Ovary (tissue), 10 donors: ENCODE measurements at regions of chr14 and their contacts with region 1.

Region 1: DNA sequence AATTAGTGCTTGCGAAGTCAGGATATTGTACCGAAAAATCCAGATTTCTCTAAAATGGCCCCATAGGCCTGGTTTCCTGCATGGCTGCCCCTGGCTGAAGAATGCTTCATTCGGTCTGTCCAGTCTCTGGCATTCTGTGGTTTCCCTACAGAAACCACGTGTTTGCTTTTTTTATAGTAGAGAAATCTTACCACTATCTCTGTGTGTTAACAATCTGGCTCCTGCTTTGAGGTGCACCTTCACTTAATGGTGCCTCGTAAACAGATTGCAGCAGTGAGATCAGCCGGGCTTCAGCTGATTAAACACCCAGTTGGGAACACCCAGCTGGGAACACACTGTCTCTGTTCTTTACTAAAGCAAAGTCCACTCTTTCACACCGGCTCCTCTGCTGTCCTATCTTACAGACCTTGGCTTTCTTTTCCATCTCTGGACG is 6.7 kb upstream of the DNAAF2 start:
- DNase-seq: no peak
- H3K4me3 ChIP-seq: no peak overlapping the region
- H3K27ac ChIP-seq: no peak overlapping the region
- H3K4me1 ChIP-seq: no peaks in the 10 kb centered on the region
- H3K27me3 ChIP-seq: no peaks in the 10 kb centered on the region
- CTCF ChIP-seq: no peak
- EP300 ChIP-seq: no peak
- POLR2A ChIP-seq: no peak

Region 2: DNA sequence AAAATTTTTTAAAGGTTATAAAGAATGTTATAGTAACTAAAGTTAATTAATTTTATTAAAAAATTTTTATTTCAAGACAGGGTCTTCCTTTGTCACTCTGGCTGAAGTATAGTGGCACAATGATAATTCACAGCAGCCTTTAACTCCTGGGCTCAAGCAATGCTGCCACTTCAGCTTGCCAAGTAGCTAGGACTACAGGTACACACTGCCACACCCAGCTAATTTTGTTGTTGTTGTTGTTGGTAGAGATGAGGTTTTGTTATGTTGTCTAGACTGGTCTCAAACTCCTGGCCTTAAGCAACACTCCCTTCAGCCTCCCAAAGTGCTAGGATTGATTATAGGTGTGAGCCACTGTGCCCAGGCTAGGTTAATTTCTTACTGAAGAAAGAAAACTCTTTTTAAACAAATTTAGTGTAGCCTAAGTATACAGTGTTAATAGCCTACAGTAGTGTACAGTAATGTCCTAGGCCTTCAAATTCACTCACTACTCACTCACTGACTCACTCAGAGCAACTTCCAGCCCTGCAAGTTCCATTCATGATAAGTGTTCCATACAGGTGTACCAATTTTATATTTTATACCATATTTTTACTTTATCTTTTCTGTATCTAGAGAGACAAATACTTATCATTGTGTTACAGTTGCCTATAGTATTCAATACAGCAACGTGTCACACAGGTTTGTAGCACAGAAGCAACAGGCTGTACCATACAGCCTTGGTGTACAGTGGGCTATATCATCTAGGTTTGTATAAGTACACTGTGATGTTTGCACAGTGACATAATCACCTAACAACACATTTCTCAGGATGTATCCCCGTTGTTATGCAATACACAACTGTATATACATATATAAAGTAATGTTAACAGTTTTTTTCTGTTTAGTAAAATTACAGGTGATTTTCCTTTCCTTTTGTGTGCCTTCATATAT is 18.1 kb after region 1 on chr14:
- intact Hi-C with region 1: no loop called
- DNase-seq: no peak
- H3K4me3 ChIP-seq: no peak overlapping the region
- H3K27ac ChIP-seq: no peak overlapping the region
- H3K4me1 ChIP-seq: no peaks in the 10 kb centered on the region
- H3K27me3 ChIP-seq: no peaks in the 10 kb centered on the region
- CTCF ChIP-seq: no peak
- EP300 ChIP-seq: no peak
- POLR2A ChIP-seq: no peak

Region 3: GRCh38 chr14:49703965-49704364 is 62.3 kb after region 1 on chr14:
- intact Hi-C with region 1: loop called in 1 of 4 experiments (anchors 10 kb)
- DNase-seq: no peak
- H3K4me3 ChIP-seq: no peak overlapping the region
- H3K27ac ChIP-seq: no peak overlapping the region
- H3K4me1 ChIP-seq: peaks cover 1% of the 10 kb centered on the region
- H3K27me3 ChIP-seq: no peaks in the 10 kb centered on the region
- CTCF ChIP-seq: no peak
- EP300 ChIP-seq: no peak
- POLR2A ChIP-seq: no peak

Region 4: DNA sequence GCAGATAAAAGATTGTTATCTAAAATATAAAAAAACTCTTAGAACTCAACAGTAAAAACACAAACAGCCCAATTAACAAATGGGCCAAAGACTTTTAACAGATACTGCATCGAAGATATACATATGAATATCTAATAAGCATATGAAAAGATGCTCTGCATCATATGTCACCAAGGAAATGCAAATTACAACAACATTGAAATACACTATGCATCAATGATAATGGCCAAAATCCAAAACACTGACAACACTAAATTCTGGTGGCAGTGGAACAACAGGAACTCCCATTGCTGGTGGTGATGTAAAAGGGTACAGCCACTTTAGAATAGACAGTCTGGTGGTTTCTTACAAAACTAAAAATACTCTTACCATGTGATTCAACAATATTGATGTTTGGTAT is 167.1 kb after region 1 on chr14:
- intact Hi-C with region 1: no loop called
- DNase-seq: no peak
- H3K4me3 ChIP-seq: no peak overlapping the region
- H3K27ac ChIP-seq: no peak overlapping the region
- H3K4me1 ChIP-seq: no peaks in the 10 kb centered on the region
- H3K27me3 ChIP-seq: no peaks in the 10 kb centered on the region
- CTCF ChIP-seq: no peak
- EP300 ChIP-seq: no peak
- POLR2A ChIP-seq: no peak